ENCODE measurements at regions of chr20 and their contacts with region 1.

Region 1: DNA sequence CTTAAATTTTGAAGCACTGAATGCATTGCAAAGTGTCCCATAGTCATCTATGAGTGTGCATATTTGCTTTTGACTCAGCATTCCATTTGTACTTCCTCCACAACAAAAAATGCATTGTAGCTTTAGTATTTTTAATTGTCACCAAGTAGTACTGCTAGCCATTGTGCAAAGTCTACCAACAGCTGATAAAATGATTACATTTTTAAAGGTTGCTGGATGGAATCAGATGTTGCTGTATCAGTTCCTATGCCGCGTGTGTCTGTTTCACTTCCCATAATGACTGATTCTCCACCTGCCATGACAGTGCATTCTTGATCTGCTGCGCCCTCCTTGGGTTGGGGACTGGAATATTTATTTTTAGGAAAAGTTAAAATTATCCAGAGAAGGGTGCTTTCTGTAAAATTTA is 41.2 kb downstream of the SLX4IP start:
- DNase-seq: peak; percentile 52 to 79 (median 70)
- H3K4me3 ChIP-seq: peak overlapping the region in 2 of 7 experiments; percentile 39 to 52
- H3K27ac ChIP-seq: no peak overlapping the region
- H3K4me1 ChIP-seq: peaks cover 5 to 57% (median 27%) of the 10 kb centered on the region in 4 experiments
- H3K27me3 ChIP-seq: no peaks in the 10 kb centered on the region

Region 2: GRCh38 chr20:9889270-9889981 is 586.9 kb before region 1 on chr20:
- CTCF ChIA-PET with region 1: no interaction called
- POLR2A ChIA-PET with region 1: no interaction called
- DNase-seq: peak in 1 of 3 donors; percentile 1
- H3K4me3 ChIP-seq: no peak overlapping the region
- H3K27ac ChIP-seq: no peak overlapping the region
- H3K4me1 ChIP-seq: no peaks in the 10 kb centered on the region
- H3K27me3 ChIP-seq: peaks cover 0 to 4% (median 0%) of the 10 kb centered on the region in 5 experiments

Region 3: DNA sequence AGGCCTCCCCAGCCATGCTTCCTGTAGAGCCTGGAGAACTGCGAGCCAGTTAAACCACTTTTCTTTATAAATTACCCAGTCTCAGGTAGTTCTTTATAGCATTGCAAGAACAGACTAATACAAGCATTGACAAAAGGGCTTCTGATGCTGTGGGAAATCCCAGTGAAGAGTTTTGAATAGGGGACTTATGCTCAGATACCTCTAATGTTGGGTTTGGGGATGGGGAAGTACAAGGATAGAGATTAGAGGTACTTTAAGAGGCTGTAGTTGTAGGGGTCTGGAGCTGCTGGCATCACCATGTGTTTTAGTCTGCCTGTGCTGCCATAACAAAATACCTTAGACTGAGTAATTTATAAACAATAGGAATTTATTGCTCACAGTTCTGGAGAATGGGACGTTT is 32.4 kb before region 1 on chr20:
- CTCF ChIA-PET with region 1: no interaction called
- POLR2A ChIA-PET with region 1: no interaction called
- DNase-seq: no peak
- H3K4me3 ChIP-seq: no peak overlapping the region
- H3K27ac ChIP-seq: no peak overlapping the region
- H3K4me1 ChIP-seq: peaks cover 0 to 21% (median 15%) of the 10 kb centered on the region in 4 experiments
- H3K27me3 ChIP-seq: no peaks in the 10 kb centered on the region

Region 4: DNA sequence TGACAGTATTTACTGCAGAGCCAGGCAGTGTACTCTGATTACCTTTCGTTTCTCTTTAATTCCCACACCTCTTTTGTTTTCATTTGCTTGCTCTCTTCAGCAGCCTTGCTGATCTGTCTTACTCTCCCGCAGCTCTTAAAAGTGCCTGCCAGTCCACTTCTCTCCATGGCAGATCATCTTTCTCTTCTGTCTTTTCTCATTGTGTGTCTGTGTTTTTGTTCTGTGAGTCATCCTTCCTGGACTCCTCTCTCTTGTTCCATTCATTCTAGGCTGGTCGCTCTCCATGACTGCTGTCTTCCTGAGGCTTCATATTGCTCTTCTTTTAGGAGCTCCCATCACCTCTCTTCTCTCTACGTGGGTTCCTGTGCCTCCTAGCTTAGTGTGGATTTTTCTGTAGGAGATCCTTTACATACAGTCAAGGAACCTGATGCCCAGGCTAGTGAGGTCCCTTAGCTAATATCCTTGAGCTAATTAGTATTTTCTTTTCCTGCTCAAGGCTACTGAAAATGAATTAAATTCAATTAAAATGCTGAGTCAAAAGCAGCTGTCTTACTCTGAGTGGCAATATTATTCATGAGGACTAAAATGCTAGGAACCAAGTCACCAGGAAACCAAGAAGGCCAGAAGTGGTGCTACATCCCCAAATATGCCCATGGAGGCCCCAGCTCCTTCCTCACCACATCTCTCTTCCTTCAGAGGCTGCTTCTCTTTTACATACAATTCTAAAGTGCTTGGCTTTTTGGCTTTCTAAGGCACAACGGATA is 44.9 kb after region 1 on chr20:
- CTCF ChIA-PET with region 1: interaction called, 10 read pairs
- POLR2A ChIA-PET with region 1: no interaction called
- DNase-seq: peak in 2 of 3 donors; percentile 40 to 57
- H3K4me3 ChIP-seq: peak overlapping the region in 3 of 7 experiments; percentile 13 to 36 (median 28)
- H3K27ac ChIP-seq: peak overlapping the region in 1 of 2 experiments; percentile 18
- H3K4me1 ChIP-seq: peaks cover 0 to 41% (median 20%) of the 10 kb centered on the region in 4 experiments
- H3K27me3 ChIP-seq: no peaks in the 10 kb centered on the region

Measured in common myeloid progenitor, CD34-positive (primary cell).